ENCODE measurements at regions of chr20 and their contacts with region 1.

Region 1: DNA sequence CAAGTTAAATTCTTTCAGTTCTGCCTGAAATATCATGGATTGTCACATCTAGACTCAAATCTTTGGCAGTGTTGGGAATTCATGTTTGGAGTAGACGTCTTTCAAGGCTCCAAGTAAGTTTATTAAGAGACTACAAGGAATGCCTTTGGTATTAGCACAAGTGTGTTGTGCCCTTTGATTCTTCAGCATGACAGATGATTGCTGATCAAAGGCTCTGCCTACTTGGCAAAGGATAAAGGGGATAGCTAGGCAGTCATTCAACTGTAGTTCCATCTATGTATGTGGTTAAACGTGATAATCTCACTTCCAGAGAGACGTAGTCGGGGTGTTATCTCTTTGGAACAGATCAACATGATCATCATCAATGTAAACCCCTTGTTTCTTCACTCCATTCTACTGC is 86.2 kb downstream of the SPTLC3 start:
- DNase-seq: no peak
- H3K4me3 ChIP-seq: no peak overlapping the region
- H3K27ac ChIP-seq: no peak overlapping the region
- H3K4me1 ChIP-seq: no peaks in the 10 kb centered on the region
- H3K27me3 ChIP-seq: no peaks in the 10 kb centered on the region
- CTCF ChIP-seq: no peak
- POLR2A ChIP-seq: no peak

Region 2: DNA sequence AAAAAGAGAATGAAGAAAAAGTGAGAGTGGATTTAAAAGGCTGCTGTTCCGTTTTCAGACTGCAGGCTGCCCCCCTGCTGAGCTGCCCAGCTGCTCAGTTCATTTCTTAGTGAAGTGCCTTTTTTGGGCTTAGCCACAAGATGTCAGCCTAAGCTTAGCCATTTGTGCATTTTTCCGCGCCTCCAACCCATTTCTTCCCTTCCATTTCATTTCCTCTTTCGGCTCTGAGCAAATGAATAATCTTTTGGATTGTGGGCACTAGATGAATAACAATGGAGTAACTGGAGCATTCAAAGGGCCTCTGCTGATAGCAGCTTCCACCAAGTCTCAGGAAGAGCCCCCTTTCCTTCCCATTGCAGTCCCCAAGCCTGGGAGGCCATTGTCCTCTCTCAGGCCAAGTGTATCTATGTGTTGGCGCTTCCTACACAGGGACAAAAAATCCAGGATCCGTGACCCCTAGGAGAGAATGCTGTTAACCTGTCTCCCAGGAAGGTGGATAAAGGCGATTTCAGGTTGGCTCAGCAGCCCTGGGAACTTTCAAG is 169.7 kb before region 1 on chr20:
- intact Hi-C with region 1: no loop called
- DNase-seq: no peak
- H3K4me3 ChIP-seq: peak overlapping the region in 1 of 3 donors; percentile 36
- H3K27ac ChIP-seq: no peak overlapping the region
- H3K4me1 ChIP-seq: no peaks in the 10 kb centered on the region
- H3K27me3 ChIP-seq: no peaks in the 10 kb centered on the region
- CTCF ChIP-seq: peak; percentile 43 to 81 (median 63)
- POLR2A ChIP-seq: no peak

Region 3: DNA sequence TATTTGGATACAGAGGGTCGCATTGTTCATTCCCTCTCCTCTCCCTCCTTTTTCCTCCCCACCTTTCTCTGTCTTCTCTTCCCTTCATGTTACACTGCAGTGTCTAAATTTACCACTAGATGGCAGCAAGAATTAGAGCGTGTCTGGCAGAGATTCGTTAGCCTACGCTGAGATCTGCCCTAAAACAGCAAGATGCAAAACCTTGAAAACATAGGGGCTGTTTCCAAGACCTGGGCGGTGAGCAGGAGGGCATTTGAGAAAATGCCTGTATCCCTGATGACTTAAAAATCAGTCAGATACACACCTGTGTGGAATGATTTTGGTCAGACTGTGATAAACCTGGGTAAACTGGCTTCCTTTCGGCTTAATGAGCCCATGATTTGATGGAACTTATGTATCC is 24.6 kb after region 1 on chr20:
- intact Hi-C with region 1: loop called (anchors 2 kb)
- DNase-seq: peak in 1 of 2 donors; percentile 24
- H3K4me3 ChIP-seq: no peak overlapping the region
- H3K27ac ChIP-seq: no peak overlapping the region
- H3K4me1 ChIP-seq: no peaks in the 10 kb centered on the region
- H3K27me3 ChIP-seq: no peaks in the 10 kb centered on the region
- CTCF ChIP-seq: peak; percentile 84 to 93 (median 91)
- POLR2A ChIP-seq: no peak

Region 4: GRCh38 chr20:13898011-13898612 is 803.1 kb after region 1 on chr20:
- intact Hi-C with region 1: no loop called
- DNase-seq: no peak
- H3K4me3 ChIP-seq: no peak overlapping the region
- H3K27ac ChIP-seq: no peak overlapping the region
- H3K4me1 ChIP-seq: no peaks in the 10 kb centered on the region
- H3K27me3 ChIP-seq: no peaks in the 10 kb centered on the region
- CTCF ChIP-seq: no peak
- POLR2A ChIP-seq: no peak

Measured in breast epithelium (tissue), 4 donors.